ENCODE measurements at regions of chr10 and their contacts with region 1.

Region 1: GRCh38 chr10:88990384-88991160 is at the start of gene FAS:
- DNase-seq: peak; percentile 80
- ATAC-seq: peak; percentile 75
- H3K4me3 ChIP-seq: peak within 1 kb of the TSS; percentile 83
- H3K27ac ChIP-seq: peak within 1 kb of the TSS; percentile 98
- H3K4me1 ChIP-seq: peaks cover 13% of the 10 kb centered on the region
- H3K27me3 ChIP-seq: no peaks in the 10 kb centered on the region
- CTCF ChIP-seq: no peak
- EP300 ChIP-seq: peak in 1 of 2 experiments; percentile 32; a peak in 1 of 4 replicates
- POLR2A ChIP-seq: peak; percentile 86
- RAD21 ChIP-seq: no peak
- polyA plus RNA-seq, gene FAS: 50.1 to 54.9 TPM

Region 2: DNA sequence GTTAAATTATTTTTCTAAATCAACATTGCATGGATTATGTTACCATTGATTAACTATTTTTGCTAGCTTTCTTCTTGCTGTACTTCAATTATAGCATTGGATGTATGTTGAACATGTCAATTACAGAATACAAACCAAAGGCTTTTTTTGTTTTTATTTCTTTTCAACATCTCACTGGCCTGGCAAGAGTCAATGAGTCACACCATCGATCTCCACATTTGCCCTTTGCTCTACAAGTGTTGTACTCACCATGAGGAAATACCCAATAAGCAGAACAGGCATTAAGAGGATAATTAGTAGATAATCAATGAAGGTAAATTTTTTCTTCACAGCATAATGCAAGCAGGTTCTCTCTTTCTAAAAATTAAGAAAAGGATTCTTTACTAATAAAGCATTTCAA is 162.3 kb before region 1 on chr10:
- CTCF ChIA-PET with region 1: interaction called, 14 read pairs
- POLR2A ChIA-PET with region 1: interaction called, 4 read pairs
- RAD21 ChIA-PET with region 1: interaction called, 34 read pairs
- SMC1A ChIA-PET with region 1: interaction called, 5 read pairs
- in situ Hi-C with region 1: no loop called
- intact Hi-C with region 1: no loop called
- DNase-seq: no peak
- ATAC-seq: no peak
- H3K4me3 ChIP-seq: no peak overlapping the region
- H3K27ac ChIP-seq: no peak overlapping the region
- H3K4me1 ChIP-seq: 0 out of 2 replicates have a peak, but pooled peaks cover 3% of the 10 kb centered on the region
- H3K27me3 ChIP-seq: no peaks in the 10 kb centered on the region
- CTCF ChIP-seq: no peak
- EP300 ChIP-seq: no peak
- POLR2A ChIP-seq: no peak
- RAD21 ChIP-seq: no peak

Region 3: DNA sequence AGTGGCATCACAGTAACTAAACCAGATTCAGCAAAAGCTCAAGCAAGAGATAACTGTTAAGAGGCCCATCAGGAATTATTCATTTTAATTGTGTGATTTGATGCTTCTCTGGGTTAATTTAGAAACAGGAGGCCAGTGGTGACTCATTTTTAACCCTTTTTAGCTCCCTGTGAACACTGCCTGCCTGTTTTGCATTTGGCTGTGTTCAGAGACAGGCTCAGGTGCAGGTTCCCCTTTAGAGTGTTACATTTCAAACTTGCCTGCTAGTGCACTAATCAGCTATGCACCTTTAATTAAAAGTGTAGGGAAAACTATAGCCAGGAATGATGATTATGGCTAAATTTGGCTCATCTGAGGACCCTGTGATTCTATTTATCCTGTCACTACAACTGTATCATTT is 104.0 kb before region 1 on chr10:
- CTCF ChIA-PET with region 1: interaction called, 39 read pairs
- POLR2A ChIA-PET with region 1: interaction called, 21 read pairs
- RAD21 ChIA-PET with region 1: interaction called, 48 read pairs
- SMC1A ChIA-PET with region 1: interaction called, 76 read pairs
- in situ Hi-C with region 1: no loop called
- intact Hi-C with region 1: loop called (anchors 5 kb)
- DNase-seq: no peak
- ATAC-seq: peak; percentile 76
- H3K4me3 ChIP-seq: peak overlapping the region; percentile 55
- H3K27ac ChIP-seq: peak overlapping the region; percentile 61
- H3K4me1 ChIP-seq: peaks cover 46% of the 10 kb centered on the region
- H3K27me3 ChIP-seq: no peaks in the 10 kb centered on the region
- CTCF ChIP-seq: no peak
- EP300 ChIP-seq: no peak
- POLR2A ChIP-seq: 0 out of 2 replicates have a peak, but pooled peaks have one; percentile 26
- RAD21 ChIP-seq: no peak

Region 4: GRCh38 chr10:88944813-88945212 is 45.8 kb before region 1 on chr10:
- CTCF ChIA-PET with region 1: interaction called, 30 read pairs
- POLR2A ChIA-PET with region 1: interaction called, 6 read pairs
- RAD21 ChIA-PET with region 1: interaction called, 7 read pairs
- SMC1A ChIA-PET with region 1: interaction called, 19 read pairs
- in situ Hi-C with region 1: no loop called
- intact Hi-C with region 1: no loop called
- DNase-seq: no peak
- ATAC-seq: peak; percentile 91
- H3K4me3 ChIP-seq: no peak overlapping the region
- H3K27ac ChIP-seq: 0 out of 2 replicates have a peak overlapping the region, but pooled peaks have one; percentile 45
- H3K4me1 ChIP-seq: peaks cover 4% of the 10 kb centered on the region
- H3K27me3 ChIP-seq: no peaks in the 10 kb centered on the region
- CTCF ChIP-seq: no peak
- EP300 ChIP-seq: peak in 1 of 2 experiments; percentile 38; a peak in 1 of 4 replicates
- POLR2A ChIP-seq: no peak
- RAD21 ChIP-seq: no peak

Region 5: DNA sequence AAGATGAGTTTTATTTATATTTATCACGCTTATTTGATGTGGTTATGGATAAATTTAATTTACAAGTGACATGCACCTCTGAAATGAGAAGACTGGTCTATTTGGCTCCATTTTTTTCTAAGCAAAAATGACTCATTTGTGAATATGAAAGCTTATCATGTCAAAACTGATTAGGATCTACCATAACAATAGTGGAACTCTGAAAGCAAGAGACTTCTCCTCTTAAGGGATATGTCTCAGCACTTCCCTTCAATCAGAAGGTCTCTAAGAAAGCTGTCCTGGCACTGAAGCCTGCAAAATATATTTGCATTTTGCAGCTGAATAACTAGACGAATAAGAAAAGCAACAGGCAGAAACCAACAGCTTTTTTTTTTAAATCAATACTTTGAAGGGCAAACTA is 12.8 kb after region 1 on chr10:
- CTCF ChIA-PET with region 1: interaction called, 33 read pairs
- POLR2A ChIA-PET with region 1: interaction called, 13 read pairs
- RAD21 ChIA-PET with region 1: interaction called, 17 read pairs
- SMC1A ChIA-PET with region 1: interaction called, 76 read pairs
- in situ Hi-C with region 1: no loop called
- intact Hi-C with region 1: no loop called
- DNase-seq: no peak
- ATAC-seq: peak; percentile 22
- H3K4me3 ChIP-seq: no peak overlapping the region
- H3K27ac ChIP-seq: no peak overlapping the region; the same call in 1 of the 2 replicates
- H3K4me1 ChIP-seq: peaks cover 35% of the 10 kb centered on the region
- H3K27me3 ChIP-seq: no peaks in the 10 kb centered on the region
- CTCF ChIP-seq: no peak
- EP300 ChIP-seq: no peak
- POLR2A ChIP-seq: no peak
- RAD21 ChIP-seq: no peak

Region 6: DNA sequence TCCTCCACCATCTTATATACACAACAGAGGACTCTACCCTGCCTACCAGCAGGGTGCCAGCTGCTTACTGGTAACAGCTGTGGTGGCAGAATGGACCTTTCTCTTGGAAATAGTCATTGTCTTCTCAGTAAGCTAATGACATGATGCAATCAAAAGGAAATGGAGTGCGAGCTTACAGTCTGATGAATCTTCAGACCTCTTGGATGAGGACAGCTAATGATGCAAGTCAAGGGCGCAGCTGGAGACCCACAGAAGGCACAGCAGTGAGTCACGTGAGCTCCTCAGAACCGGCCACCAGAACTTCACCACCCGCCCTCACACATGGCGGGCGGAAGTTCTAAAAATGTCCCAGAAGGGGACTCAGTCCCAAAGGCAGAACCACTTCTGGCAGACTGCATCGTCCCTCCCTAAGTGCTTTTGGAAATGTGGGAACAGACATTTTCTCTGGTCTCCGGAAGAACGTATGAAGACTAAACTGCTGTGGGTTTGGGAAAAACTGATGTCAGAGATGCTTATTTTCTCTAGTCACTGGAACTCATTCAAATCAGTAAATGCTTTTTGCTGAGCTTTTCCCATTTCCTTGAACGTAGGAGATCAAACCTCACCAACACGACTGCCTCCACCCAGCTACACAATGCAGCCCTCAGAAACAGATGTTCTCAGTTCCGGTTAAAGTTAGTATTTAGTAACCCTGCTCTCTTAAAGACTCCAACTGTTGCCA is 96.4 kb after region 1 on chr10:
- CTCF ChIA-PET with region 1: interaction called, 11 read pairs
- POLR2A ChIA-PET with region 1: interaction called, 3 read pairs
- RAD21 ChIA-PET with region 1: no interaction called
- SMC1A ChIA-PET with region 1: interaction called, 3 read pairs
- in situ Hi-C with region 1: no loop called
- intact Hi-C with region 1: no loop called
- DNase-seq: no peak
- ATAC-seq: no peak
- H3K4me3 ChIP-seq: no peak overlapping the region
- H3K27ac ChIP-seq: no peak overlapping the region
- H3K4me1 ChIP-seq: peaks cover 7% of the 10 kb centered on the region; the same call in 1 of the 2 replicates
- H3K27me3 ChIP-seq: no peaks in the 10 kb centered on the region
- CTCF ChIP-seq: no peak
- EP300 ChIP-seq: no peak
- POLR2A ChIP-seq: no peak
- RAD21 ChIP-seq: no peak